GM10248 (cell line): ENCODE measurements at regions of chr16 and their contacts with region 1.

Region 1: DNA sequence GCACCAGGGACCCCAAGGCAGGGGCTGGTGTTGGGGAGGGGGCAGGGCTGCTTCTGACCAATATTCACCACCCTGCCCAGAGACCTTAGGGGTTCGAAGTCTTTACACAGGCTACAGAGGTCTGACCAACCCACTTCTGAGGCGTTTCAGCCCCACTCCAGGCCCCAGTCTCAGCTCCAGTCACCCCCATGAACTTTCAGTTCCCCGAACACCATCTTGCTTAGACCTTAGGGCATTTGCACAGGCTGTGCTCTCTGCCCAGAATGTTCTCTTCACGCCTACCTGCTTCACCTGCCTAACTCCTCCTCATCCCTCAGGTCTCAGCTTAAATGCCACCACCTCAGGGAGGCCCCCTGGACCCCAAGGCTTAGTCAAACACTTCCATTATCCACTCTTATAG is 25.8 kb upstream of the CPNE2 start:
- DNase-seq: peak; percentile 62
- CTCF ChIP-seq: no peak

Region 2: DNA sequence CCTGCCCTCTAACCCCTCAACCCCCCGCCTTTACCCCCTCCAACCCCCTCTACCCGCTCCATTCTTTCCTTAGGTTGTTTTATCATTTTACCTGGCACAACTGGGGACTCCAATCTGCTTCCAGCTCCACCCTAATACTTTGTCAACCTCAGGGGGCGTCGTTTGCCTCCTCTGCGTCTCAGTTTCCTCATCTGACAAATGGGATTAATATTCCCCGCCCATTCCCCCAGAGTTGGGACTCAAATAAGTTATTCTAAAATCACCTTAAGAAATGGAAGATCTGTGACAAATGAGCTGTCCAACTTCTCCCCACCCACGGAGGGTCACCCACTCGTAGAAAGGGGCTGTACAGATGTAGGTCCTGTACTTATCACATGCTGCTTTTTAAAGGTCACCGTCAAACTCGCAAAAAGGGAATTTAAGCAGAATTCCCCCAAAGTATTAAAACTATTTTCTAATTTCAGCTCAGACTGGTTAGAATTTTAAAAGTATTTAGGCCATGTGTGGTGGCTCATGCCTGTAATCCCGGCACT is 14.9 kb before region 1 on chr16:
- CTCF ChIA-PET with region 1: interaction called, 14 read pairs
- POLR2A ChIA-PET with region 1: no interaction called
- DNase-seq: peak; percentile 56
- CTCF ChIP-seq: no peak